Lower leg skin (tissue), 4 donors: ENCODE measurements at regions of chr10 and their contacts with region 1.

Region 1: GRCh38 chr10:73591935-73592699 is 975 bp upstream of the USP54 start:
- DNase-seq: peak in 1 of 2 donors; percentile 62
- H3K4me3 ChIP-seq: no peak overlapping the region
- CTCF ChIP-seq: no peak
- POLR2A ChIP-seq: no peak

Region 2: GRCh38 chr10:73614720-73615119 is 22.6 kb after region 1 on chr10:
- intact Hi-C with region 1: loop called (anchors 1 kb)
- DNase-seq: peak in 1 of 2 donors; percentile 8
- H3K4me3 ChIP-seq: no peak overlapping the region
- CTCF ChIP-seq: no peak
- POLR2A ChIP-seq: no peak